Heart left ventricle (tissue), 16 donors: ENCODE measurements at regions of chr19 and their contacts with region 1.

Region 1: GRCh38 chr19:10112895-10113591 is 1.6 kb downstream of the P2RY11 start:
- DNase-seq: peak in 1 of 5 donors; percentile 71
- ATAC-seq: peak in 3 of 4 donors; percentile 8 to 37 (median 34)
- H3K4me3 ChIP-seq: peak overlapping the region in 1 of 12 donors; percentile 40
- H3K27ac ChIP-seq: peak overlapping the region in 1 of 12 donors; percentile 86
- H3K4me1 ChIP-seq: peaks cover 0 to 37% (median 0%) of the 10 kb centered on the region in 12 donors
- H3K27me3 ChIP-seq: no peaks in the 10 kb centered on the region
- CTCF ChIP-seq: peak; percentile 34 to 60 (median 46)
- POLR2A ChIP-seq: no peak

Region 2: DNA sequence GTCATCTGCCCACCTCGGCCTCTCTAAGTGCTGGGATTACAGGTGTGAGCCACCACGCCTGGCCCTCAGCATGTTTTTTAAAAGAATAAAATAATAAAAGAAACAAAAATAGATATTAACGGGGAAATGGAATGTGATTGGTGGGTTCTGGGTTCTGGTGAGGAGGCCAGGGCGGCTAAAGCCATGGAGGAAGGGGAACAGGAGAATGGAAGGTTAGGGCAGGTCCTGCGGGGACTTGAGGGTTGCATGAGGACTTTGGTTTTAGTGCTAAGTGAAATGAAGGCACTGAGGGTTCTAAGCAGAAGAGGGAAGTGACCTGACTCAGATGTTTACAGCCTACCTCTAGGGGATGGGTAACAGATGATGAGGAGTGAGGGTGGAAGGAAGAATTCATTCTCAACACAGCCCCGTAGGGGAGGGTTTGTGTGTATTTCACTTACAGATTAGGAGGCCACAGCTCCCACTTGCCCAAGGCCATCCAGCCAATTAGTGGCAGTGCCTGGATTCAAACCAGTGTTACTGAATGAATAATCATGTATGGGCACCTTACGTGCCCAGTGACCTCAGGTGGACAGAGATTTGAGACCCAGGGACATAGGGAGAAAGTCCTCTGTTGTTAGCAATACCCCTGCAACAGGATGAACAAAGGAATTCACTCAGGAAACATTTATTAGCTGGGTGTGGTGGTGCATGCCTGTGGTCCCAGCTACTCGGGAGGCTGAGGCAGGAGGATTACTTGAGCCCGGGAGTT is 132.3 kb after region 1 on chr19:
- intact Hi-C with region 1: loop called in 5 of 10 experiments (anchors 5 to 10 kb)
- DNase-seq: no peak
- ATAC-seq: no peak
- H3K4me3 ChIP-seq: no peak overlapping the region
- H3K27ac ChIP-seq: no peak overlapping the region
- H3K4me1 ChIP-seq: peaks cover 0 to 7% (median 0%) of the 10 kb centered on the region in 12 donors
- H3K27me3 ChIP-seq: no peaks in the 10 kb centered on the region
- CTCF ChIP-seq: no peak
- POLR2A ChIP-seq: no peak

Region 3: GRCh38 chr19:10380313-10381102 is 267.5 kb after region 1 on chr19 and contains the start of gene TYK2:
- intact Hi-C with region 1: loop called in 1 of 10 experiments (anchors 10 kb)
- DNase-seq: peak; percentile 97 to 98 (median 98)
- ATAC-seq: peak; percentile 99
- H3K4me3 ChIP-seq: peak within 1 kb of the TSS; percentile 71 to 99 (median 90)
- H3K27ac ChIP-seq: peak within 1 kb of the TSS; percentile 41 to 90 (median 82)
- H3K4me1 ChIP-seq: peaks cover 0 to 37% (median 12%) of the 10 kb centered on the region in 12 donors
- H3K27me3 ChIP-seq: no peaks in the 10 kb centered on the region
- CTCF ChIP-seq: no peak
- POLR2A ChIP-seq: peak in 1 of 2 donors; percentile 66
- total RNA-seq, gene TYK2: 37.7 to 86.3 (median 55.3) TPM